ENCODE measurements at regions of chr1 and their contacts with region 1.

Region 1: GRCh38 chr1:146036965-146037646 is 15.6 kb upstream of the HJV start:
- DNase-seq: peak; percentile 82 to 85 (median 84)
- H3K4me3 ChIP-seq: peak overlapping the region; percentile 65 to 77
- H3K4me3 Mint-ChIP-seq: peak overlapping the region; percentile 93 to 99 (median 97)
- H3K27ac ChIP-seq: peak overlapping the region; percentile 62
- H3K27ac Mint-ChIP-seq: peak overlapping the region; percentile 94 to 100 (median 97)
- H3K4me1 ChIP-seq: peaks cover 25% of the 10 kb centered on the region
- H3K4me1 Mint-ChIP-seq: peaks cover 16 to 56% (median 29%) of the 10 kb centered on the region in 4 donors
- H3K27me3 ChIP-seq: no peaks in the 10 kb centered on the region
- H3K27me3 Mint-ChIP-seq: peaks cover 2 to 27% of the 10 kb centered on the region in 2 donors

Region 2: GRCh38 chr1:145823565-145824498 is 213.3 kb before region 1 on chr1 and contains the starts of genes POLR3C and RNF115:
- CTCF ChIA-PET with region 1: no interaction called
- POLR2A ChIA-PET with region 1: interaction called, 10 read pairs
- intact Hi-C with region 1: no loop called
- DNase-seq: peak; percentile 84 to 92 (median 86)
- H3K4me3 ChIP-seq: peak within 1 kb of the TSS; percentile 93 to 100
- H3K4me3 Mint-ChIP-seq: peak within 1 kb of the TSS; percentile 97 to 99 (median 98)
- H3K27ac ChIP-seq: peak within 1 kb of the TSS; percentile 78
- H3K27ac Mint-ChIP-seq: peak within 1 kb of the TSS; percentile 90 to 99 (median 97)
- H3K4me1 ChIP-seq: peaks cover 23% of the 10 kb centered on the region
- H3K4me1 Mint-ChIP-seq: peaks cover 17 to 35% (median 24%) of the 10 kb centered on the region in 4 donors
- H3K27me3 ChIP-seq: no peaks in the 10 kb centered on the region
- H3K27me3 Mint-ChIP-seq: no peaks in the 10 kb centered on the region
- total RNA-seq, gene POLR3C: 43.5 to 44.8 TPM
- total RNA-seq, gene RNF115: 15.2 to 15.3 TPM

Region 3: DNA sequence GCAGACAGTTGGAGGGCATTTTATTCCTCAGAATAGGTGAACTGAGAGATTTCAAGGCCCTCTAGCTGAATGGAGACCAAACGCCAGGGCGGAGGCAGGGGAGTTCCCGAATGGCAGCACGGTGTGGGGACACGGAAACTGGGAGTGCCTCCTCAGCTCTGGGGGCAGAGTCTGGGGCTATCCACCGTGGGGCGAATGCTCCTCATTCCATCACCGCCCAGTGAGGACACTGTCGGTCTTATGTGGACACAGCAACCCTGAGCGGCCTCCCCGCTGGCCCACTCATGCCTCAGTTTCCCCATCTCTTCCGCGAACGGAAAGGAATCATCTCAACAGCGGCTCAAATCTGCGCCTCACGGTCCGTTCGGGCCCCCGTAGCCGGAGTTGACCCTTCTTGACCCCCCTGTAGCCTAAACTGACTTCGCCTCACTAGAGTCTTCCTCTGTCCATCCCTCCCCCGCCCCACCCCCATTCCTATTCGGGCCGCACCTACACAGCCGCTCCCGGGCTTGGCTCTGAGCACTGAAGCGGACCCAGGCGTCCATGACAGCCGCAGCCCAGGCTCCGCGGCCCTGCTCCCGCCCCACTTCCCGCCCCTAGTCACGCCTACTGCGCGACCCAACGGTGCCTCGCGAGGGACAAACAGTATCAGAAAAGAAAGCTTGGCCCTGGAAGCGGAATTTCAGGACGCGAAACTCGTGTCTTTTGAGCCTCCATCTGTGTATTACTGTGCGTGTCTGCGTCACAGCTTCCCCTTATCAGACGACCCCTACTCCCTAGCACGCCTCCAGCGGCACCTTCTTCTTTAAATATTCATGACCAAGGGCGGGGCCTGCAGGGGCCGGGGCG is 118.7 kb before region 1 on chr1 and contains the start of gene PEX11B:
- CTCF ChIA-PET with region 1: interaction called, 3 read pairs
- POLR2A ChIA-PET with region 1: interaction called, 14 read pairs
- intact Hi-C with region 1: no loop called
- DNase-seq: peak; percentile 90 to 96 (median 92)
- H3K4me3 ChIP-seq: peak within 1 kb of the TSS; percentile 90 to 96
- H3K4me3 Mint-ChIP-seq: peak within 1 kb of the TSS; percentile 89 to 96 (median 92)
- H3K27ac ChIP-seq: peak within 1 kb of the TSS; percentile 79
- H3K27ac Mint-ChIP-seq: peak within 1 kb of the TSS; percentile 91 to 97 (median 95)
- H3K4me1 ChIP-seq: peaks cover 28% of the 10 kb centered on the region
- H3K4me1 Mint-ChIP-seq: peaks cover 24 to 45% (median 35%) of the 10 kb centered on the region in 4 donors
- H3K27me3 ChIP-seq: no peaks in the 10 kb centered on the region
- H3K27me3 Mint-ChIP-seq: no peaks in the 10 kb centered on the region
- total RNA-seq, gene PEX11B: 34.7 to 38.7 TPM

Region 4: GRCh38 chr1:145957443-145958319 is 79.4 kb before region 1 on chr1 and contains the start of gene LIX1L:
- CTCF ChIA-PET with region 1: interaction called, 5 read pairs
- POLR2A ChIA-PET with region 1: interaction called, 54 read pairs
- intact Hi-C with region 1: no loop called
- DNase-seq: peak; percentile 92 to 98 (median 94)
- H3K4me3 ChIP-seq: peak within 1 kb of the TSS; percentile 31 to 63
- H3K4me3 Mint-ChIP-seq: peak within 1 kb of the TSS; percentile 89 to 99 (median 96)
- H3K27ac ChIP-seq: peak within 1 kb of the TSS; percentile 81
- H3K27ac Mint-ChIP-seq: peak within 1 kb of the TSS; percentile 89 to 99 (median 97)
- H3K4me1 ChIP-seq: peaks cover 65% of the 10 kb centered on the region
- H3K4me1 Mint-ChIP-seq: peaks cover 55 to 88% (median 65%) of the 10 kb centered on the region in 4 donors
- H3K27me3 ChIP-seq: no peaks in the 10 kb centered on the region
- H3K27me3 Mint-ChIP-seq: no peaks in the 10 kb centered on the region
- total RNA-seq, gene LIX1L: 64.5 to 66.1 TPM

Region 5: DNA sequence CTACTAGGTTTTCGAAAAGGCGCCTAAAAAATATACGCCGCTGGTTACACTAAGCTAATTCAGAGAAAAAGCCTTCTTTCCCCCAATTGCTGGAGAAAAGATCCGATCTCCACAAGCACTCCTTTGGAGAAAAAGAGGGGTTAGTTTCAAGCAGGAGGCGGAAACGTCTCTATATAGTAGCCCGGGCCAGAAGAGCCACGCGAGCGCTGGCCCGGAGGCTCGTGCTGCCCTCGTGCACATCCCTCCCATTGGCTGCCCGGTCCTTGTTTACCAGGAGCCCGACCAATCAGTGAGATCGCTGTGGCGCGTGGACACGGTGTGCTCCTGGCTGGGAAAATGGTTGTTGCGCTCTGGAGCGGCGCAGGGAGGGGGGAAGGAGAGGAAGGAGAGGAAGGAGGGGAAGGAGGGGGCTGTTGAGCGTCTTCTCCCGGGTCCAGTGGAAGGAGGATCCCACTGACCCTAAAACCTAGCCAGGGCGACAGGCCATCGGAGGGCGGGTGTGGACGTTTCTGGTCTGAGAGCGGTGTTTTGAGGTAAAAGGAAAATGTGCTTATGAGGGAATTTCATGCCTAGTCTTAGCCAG is 40.6 kb before region 1 on chr1 and contains the start of gene TXNIP:
- CTCF ChIA-PET with region 1: interaction called, 6 read pairs
- POLR2A ChIA-PET with region 1: interaction called, 122 read pairs
- intact Hi-C with region 1: loop called (anchors 2 kb)
- DNase-seq: peak; percentile 90 to 96 (median 94)
- H3K4me3 ChIP-seq: peak within 1 kb of the TSS; percentile 97 to 99
- H3K4me3 Mint-ChIP-seq: peak within 1 kb of the TSS; percentile 96 to 99 (median 98)
- H3K27ac ChIP-seq: peak within 1 kb of the TSS; percentile 75
- H3K27ac Mint-ChIP-seq: peak within 1 kb of the TSS; percentile 96 to 99 (median 97)
- H3K4me1 ChIP-seq: peaks cover 62% of the 10 kb centered on the region
- H3K4me1 Mint-ChIP-seq: peaks cover 39 to 89% (median 50%) of the 10 kb centered on the region in 4 donors
- H3K27me3 ChIP-seq: no peaks in the 10 kb centered on the region
- H3K27me3 Mint-ChIP-seq: no peaks in the 10 kb centered on the region
- total RNA-seq, gene TXNIP: 933 to 985 TPM

Region 6: DNA sequence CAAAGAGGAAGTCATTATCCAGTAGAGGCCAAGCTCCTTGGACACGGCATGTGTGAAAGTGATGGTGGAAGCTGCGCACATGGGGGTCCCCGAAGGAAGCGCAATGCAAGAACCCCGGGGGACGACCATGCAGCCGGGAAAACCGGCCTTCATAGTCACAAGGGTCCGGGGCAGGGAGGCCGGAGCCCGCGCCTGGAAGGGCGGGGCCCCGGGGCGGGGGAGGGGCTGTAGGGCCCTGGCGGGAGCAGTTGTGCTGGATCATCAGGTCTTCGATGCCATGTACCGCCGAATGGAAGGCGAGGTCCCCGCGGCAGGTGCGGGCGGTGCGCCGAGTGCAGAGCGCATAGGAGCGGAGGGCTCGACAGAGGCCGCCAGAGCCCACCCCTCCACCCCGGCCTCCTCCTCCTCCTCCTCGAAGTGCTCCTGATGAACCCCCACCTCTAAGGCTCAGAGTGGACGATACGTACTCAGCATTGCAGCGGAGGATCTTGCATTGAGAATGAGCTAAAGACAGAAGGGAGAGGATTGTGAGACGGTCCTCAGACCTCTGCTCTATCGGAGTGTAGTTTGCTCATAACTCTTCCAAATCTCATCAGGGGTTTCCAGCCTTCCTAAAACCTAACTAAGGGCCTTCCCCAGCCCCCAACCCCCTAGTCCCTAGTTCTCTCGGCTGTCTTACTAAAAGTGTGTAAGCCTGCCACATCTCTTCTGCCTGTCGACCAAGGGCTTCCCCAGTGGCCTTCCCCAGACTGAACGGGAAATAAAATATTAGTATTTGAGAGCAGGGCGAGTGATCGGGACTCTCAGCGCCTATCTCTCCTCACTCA is 17.7 kb before region 1 on chr1:
- CTCF ChIA-PET with region 1: interaction called, 10 read pairs
- POLR2A ChIA-PET with region 1: interaction called, 4 read pairs
- intact Hi-C with region 1: no loop called
- DNase-seq: no peak
- H3K4me3 ChIP-seq: no peak overlapping the region
- H3K4me3 Mint-ChIP-seq: peak overlapping the region in 5 of 8 donors; percentile 22 to 72 (median 51)
- H3K27ac ChIP-seq: no peak overlapping the region
- H3K27ac Mint-ChIP-seq: no peak overlapping the region
- H3K4me1 ChIP-seq: peaks cover 12% of the 10 kb centered on the region
- H3K4me1 Mint-ChIP-seq: peaks cover 8 to 10% (median 9%) of the 10 kb centered on the region in 4 donors
- H3K27me3 ChIP-seq: peaks cover 34% of the 10 kb centered on the region
- H3K27me3 Mint-ChIP-seq: peaks cover 35 to 40% of the 10 kb centered on the region in 2 donors

Region 7: GRCh38 chr1:146049436-146049835 is 12.3 kb after region 1 on chr1:
- CTCF ChIA-PET with region 1: interaction called, 25 read pairs
- POLR2A ChIA-PET with region 1: interaction called, 155 read pairs
- intact Hi-C with region 1: loop called (anchors 2 kb)
- DNase-seq: peak in 1 of 5 donors; percentile 35
- H3K4me3 ChIP-seq: no peak overlapping the region
- H3K4me3 Mint-ChIP-seq: peak overlapping the region in 2 of 8 donors; percentile 0 to 38
- H3K27ac ChIP-seq: no peak overlapping the region
- H3K27ac Mint-ChIP-seq: peak overlapping the region in 3 of 7 donors; percentile 2 to 62 (median 40)
- H3K4me1 ChIP-seq: peaks cover 8% of the 10 kb centered on the region
- H3K4me1 Mint-ChIP-seq: peaks cover 7 to 41% (median 28%) of the 10 kb centered on the region in 4 donors
- H3K27me3 ChIP-seq: no peaks in the 10 kb centered on the region
- H3K27me3 Mint-ChIP-seq: no peaks in the 10 kb centered on the region